HEK293 (cell line): ENCODE measurements at regions of chr19 and their contacts with region 1.

Region 1: GRCh38 chr19:18281082-18282020 is at the start of gene JUND:
- H3K4me3 ChIP-seq: peak within 1 kb of the TSS; percentile 88
- H3K27ac ChIP-seq: peak within 1 kb of the TSS; percentile 98
- H3K4me1 ChIP-seq: no peaks in the 10 kb centered on the region
- CTCF ChIP-seq: peak; percentile 20

Region 2: GRCh38 chr19:17658666-17659065 is 622.7 kb before region 1 on chr19:
- CTCF ChIA-PET with region 1: no interaction called
- POLR2A ChIA-PET with region 1: no interaction called
- H3K4me3 ChIP-seq: no peak overlapping the region
- H3K27ac ChIP-seq: no peak overlapping the region
- H3K4me1 ChIP-seq: no peaks in the 10 kb centered on the region
- CTCF ChIP-seq: no peak

Region 3: GRCh38 chr19:18251587-18252369 is 29.6 kb before region 1 on chr19:
- CTCF ChIA-PET with region 1: interaction called, 32 read pairs
- POLR2A ChIA-PET with region 1: interaction called, 6 read pairs
- H3K4me3 ChIP-seq: no peak overlapping the region
- H3K27ac ChIP-seq: no peak overlapping the region
- H3K4me1 ChIP-seq: no peaks in the 10 kb centered on the region
- CTCF ChIP-seq: peak; percentile 80

Region 4: GRCh38 chr19:18304458-18305310 is 23.3 kb after region 1 on chr19:
- CTCF ChIA-PET with region 1: interaction called, 41 read pairs
- POLR2A ChIA-PET with region 1: interaction called, 41 read pairs
- H3K4me3 ChIP-seq: no peak overlapping the region
- H3K27ac ChIP-seq: no peak overlapping the region; the same call in 1 of the 2 replicates
- H3K4me1 ChIP-seq: peaks cover 5% of the 10 kb centered on the region; the same call in 1 of the 2 replicates
- CTCF ChIP-seq: peak; percentile 46; the same call in 1 of the 2 replicates

Region 5: DNA sequence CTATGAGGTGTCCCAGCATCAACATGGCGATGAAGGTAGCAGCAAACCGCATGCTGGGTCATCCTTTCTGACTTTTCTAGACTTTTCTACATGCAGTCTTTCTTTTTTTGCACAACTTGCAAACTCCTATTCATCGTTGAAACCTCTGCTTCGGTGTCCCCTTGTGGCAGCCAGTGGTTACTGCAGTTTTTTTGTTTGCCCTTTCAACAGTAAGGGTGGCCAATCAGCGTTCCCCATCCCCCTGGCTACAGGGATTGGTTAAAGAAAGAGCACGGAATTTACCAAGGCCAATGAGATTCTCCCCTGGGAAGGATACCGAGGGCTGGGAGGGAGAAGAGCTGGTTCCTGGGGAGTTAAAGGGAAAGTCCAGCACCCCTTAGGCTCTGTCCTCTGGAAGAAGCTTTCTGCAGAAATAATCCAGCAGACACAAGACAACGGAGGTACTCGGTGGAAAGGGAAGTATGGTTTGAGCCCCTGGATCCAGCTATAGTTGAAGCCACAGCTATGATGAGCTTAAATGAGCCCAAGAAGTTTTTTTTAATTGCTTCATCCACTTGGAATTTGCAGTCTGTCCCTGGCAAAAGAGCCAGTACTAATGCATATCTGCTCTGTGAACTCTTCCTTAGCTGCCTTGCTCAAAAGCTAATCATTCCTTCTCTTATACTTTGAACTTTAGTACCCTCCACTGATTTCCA is 47.1 kb after region 1 on chr19:
- CTCF ChIA-PET with region 1: interaction called, 195 read pairs
- POLR2A ChIA-PET with region 1: interaction called, 117 read pairs
- H3K4me3 ChIP-seq: peak overlapping the region; percentile 23
- H3K27ac ChIP-seq: peak overlapping the region; percentile 27; the same call in 1 of the 2 replicates
- H3K4me1 ChIP-seq: peaks cover 1% of the 10 kb centered on the region
- CTCF ChIP-seq: peak; percentile 59; the same call in 1 of the 2 replicates

Region 6: GRCh38 chr19:18364826-18365528 is 83.6 kb after region 1 on chr19:
- CTCF ChIA-PET with region 1: interaction called, 10 read pairs
- POLR2A ChIA-PET with region 1: interaction called, 19 read pairs
- H3K4me3 ChIP-seq: no peak overlapping the region
- H3K27ac ChIP-seq: peak overlapping the region; percentile 94
- H3K4me1 ChIP-seq: no peaks in the 10 kb centered on the region; the same call in 1 of the 2 replicates
- CTCF ChIP-seq: no peak

Region 7: DNA sequence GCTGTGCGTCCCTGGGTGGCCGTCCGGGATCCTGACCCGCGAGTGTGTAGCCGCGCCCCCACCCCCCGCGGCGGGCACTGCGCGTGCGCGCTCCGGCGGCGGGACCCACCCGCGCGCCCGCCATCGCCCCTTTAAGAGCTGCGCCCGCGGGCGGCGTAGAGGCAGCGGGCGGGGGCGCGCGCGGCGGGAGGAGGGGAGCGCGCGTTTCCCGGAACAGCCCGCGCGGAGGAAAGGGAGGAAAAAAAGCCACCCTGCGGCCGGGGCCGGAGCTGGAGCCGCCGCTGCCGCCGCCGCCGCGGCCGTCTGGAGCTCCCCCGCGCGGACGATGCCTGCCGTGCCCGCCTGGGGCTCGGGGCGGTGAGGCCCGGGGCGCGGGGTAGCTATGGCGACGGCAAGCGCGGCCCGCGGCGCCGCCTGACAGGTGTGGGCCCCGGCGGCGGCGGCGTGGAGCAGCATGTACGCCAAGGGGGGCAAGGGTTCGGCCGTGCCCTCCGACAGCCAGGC is 137.9 kb after region 1 on chr19 and contains the start of gene SSBP4:
- CTCF ChIA-PET with region 1: interaction called, 70 read pairs
- POLR2A ChIA-PET with region 1: interaction called, 75 read pairs
- H3K4me3 ChIP-seq: peak within 1 kb of the TSS; percentile 53
- H3K27ac ChIP-seq: peak within 1 kb of the TSS; percentile 63; the same call in 1 of the 2 replicates
- H3K4me1 ChIP-seq: peaks cover 9% of the 10 kb centered on the region; the same call in 1 of the 2 replicates
- CTCF ChIP-seq: no peak